Heart right ventricle (tissue), 16 donors: ENCODE measurements at regions of chr6 and their contacts with region 1.

Region 1: DNA sequence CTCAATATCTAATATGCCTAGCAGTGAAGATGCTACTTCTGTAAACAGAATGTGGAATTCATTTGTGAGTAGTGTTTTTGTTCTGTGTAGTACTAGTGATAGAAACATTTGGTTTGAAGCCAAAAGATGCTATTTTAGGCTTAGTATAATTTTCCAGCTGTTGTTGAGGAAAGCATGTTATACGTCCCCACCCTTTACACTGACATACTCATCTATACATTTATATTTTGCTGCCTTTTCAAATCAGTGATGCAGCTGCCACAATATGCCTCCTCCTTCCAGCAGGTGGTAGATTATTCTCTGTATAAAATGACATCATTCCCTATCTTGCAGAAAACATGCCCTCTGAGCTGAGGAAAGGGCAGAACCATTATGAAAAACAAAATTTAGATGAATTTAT is 1217.6 kb upstream of the GJE1 start:
- DNase-seq: no peak
- ATAC-seq: peak in 3 of 8 donors; percentile 49 to 65 (median 59)
- H3K4me3 ChIP-seq: no peak overlapping the region
- H3K27ac ChIP-seq: peak overlapping the region in 5 of 10 donors; percentile 7 to 46 (median 14)
- H3K4me1 ChIP-seq: peaks cover 2 to 17% (median 12%) of the 10 kb centered on the region in 9 donors
- H3K27me3 ChIP-seq: no peaks in the 10 kb centered on the region
- CTCF ChIP-seq: peak in 3 of 9 donors; percentile 10 to 30 (median 27)

Region 2: GRCh38 chr6:140774080-140774505 is 141.0 kb before region 1 on chr6:
- intact Hi-C with region 1: loop called in 1 of 10 experiments (anchors 10 kb)
- DNase-seq: peak in 1 of 2 donors; percentile 71
- ATAC-seq: peak; percentile 82 to 99 (median 98)
- H3K4me3 ChIP-seq: no peak overlapping the region
- H3K27ac ChIP-seq: peak overlapping the region in 9 of 10 donors; percentile 33 to 79 (median 65)
- H3K4me1 ChIP-seq: peaks cover 0 to 25% (median 11%) of the 10 kb centered on the region in 9 donors
- H3K27me3 ChIP-seq: no peaks in the 10 kb centered on the region
- CTCF ChIP-seq: no peak

Region 3: DNA sequence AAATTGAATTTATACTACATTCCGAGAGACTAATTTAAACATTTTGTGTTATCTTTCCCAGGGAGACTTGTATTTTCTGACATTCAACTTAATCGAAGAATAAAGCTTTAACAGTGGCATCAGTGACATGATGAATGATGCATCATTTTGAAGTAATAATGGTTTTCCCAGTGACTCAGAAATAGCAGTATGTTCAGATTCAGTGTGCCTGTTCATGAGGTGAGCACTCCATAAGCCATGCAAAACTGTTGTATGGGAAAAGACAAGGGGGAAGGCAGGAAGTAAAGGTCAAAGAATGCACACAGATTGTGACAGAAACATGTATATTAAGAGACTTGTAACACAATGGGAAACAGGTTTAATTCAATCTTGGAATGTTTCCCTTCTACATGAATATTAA is 130.5 kb before region 1 on chr6:
- intact Hi-C with region 1: loop called in 2 of 10 experiments (anchors 5 to 10 kb)
- DNase-seq: no peak
- ATAC-seq: no peak
- H3K4me3 ChIP-seq: no peak overlapping the region
- H3K27ac ChIP-seq: no peak overlapping the region
- H3K4me1 ChIP-seq: no peaks in the 10 kb centered on the region
- H3K27me3 ChIP-seq: no peaks in the 10 kb centered on the region
- CTCF ChIP-seq: no peak

Region 4: GRCh38 chr6:140979642-140980091 is 64.6 kb after region 1 on chr6:
- intact Hi-C with region 1: no loop called
- DNase-seq: peak in 1 of 2 donors; percentile 8
- ATAC-seq: peak; percentile 47 to 90 (median 82)
- H3K4me3 ChIP-seq: no peak overlapping the region
- H3K27ac ChIP-seq: peak overlapping the region in 9 of 10 donors; percentile 5 to 61 (median 44)
- H3K4me1 ChIP-seq: peaks cover 0 to 20% (median 10%) of the 10 kb centered on the region in 9 donors
- H3K27me3 ChIP-seq: no peaks in the 10 kb centered on the region
- CTCF ChIP-seq: no peak